Testis (tissue), 5 donors: ENCODE measurements at regions of chr6 and their contacts with region 1.

Region 1: GRCh38 chr6:117674991-117675657 is at the start of gene NUS1:
- DNase-seq: peak; percentile 99
- H3K4me3 ChIP-seq: peak within 1 kb of the TSS; percentile 67 to 80
- H3K27ac ChIP-seq: peak within 1 kb of the TSS; percentile 62 to 76
- H3K4me1 ChIP-seq: peaks cover 20% of the 10 kb centered on the region
- H3K27me3 ChIP-seq: no peaks in the 10 kb centered on the region
- CTCF ChIP-seq: peak; percentile 68 to 94 (median 86)
- POLR2A ChIP-seq: no peak
- total RNA-seq, gene NUS1: 16.6 to 21.5 TPM

Region 2: DNA sequence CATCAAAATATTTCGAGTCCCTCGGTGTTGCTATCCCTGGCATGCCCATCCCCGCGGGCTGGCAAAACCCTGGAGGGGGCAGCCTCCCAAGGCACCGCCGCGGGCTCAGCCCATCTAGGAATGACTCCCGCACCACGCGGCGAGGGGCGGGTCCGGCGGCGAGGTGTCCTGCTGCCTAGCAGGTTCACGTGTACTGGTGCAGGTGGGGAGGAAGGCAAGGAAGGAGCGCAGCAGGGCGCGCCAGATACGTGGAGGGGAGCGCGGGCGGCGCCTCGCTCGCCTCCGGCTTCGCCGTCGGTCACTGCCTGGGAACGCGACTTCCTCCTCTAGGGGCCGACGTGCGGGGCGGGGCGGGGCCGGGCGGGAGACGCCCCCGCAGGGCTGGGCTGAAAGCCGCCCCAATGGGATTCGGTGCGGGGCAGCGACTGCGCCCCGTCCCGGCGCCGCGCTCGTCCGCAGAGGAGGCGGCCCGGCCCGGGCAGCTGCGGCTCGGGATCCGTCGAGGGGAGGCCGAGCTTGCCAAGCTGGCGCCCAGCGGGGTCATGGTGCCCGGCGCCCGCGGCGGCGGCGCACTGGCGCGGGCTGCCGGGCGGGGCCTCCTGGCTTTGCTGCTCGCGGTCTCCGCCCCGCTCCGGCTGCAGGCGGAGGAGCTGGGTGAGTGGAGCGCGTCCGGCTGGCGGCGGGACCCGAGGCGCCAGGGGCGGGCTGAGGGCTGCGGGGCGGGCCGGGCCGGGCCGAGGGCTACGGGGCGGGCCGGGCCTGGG is 192.7 kb before region 1 on chr6 and contains the start of gene DCBLD1:
- intact Hi-C with region 1: no loop called
- DNase-seq: peak; percentile 68
- H3K4me3 ChIP-seq: peak within 1 kb of the TSS; percentile 71 to 75
- H3K27ac ChIP-seq: peak within 1 kb of the TSS; percentile 77 to 81
- H3K4me1 ChIP-seq: peaks cover 13% of the 10 kb centered on the region
- H3K27me3 ChIP-seq: no peaks in the 10 kb centered on the region
- CTCF ChIP-seq: no peak
- POLR2A ChIP-seq: no peak
- total RNA-seq, gene DCBLD1: 16.7 to 22.2 TPM

Region 3: GRCh38 chr6:117602151-117602898 is 72.8 kb before region 1 on chr6 and contains the start of gene GOPC:
- intact Hi-C with region 1: loop called (anchors 10 kb)
- DNase-seq: peak; percentile 96
- H3K4me3 ChIP-seq: peak within 1 kb of the TSS; percentile 85 to 91
- H3K27ac ChIP-seq: peak within 1 kb of the TSS; percentile 87 to 96
- H3K4me1 ChIP-seq: peaks cover 7% of the 10 kb centered on the region
- H3K27me3 ChIP-seq: no peaks in the 10 kb centered on the region
- CTCF ChIP-seq: no peak
- POLR2A ChIP-seq: no peak
- total RNA-seq, gene GOPC: 26.6 to 29.9 TPM